CD14-positive monocyte (primary cell): ENCODE measurements at regions of chr2 and their contacts with region 1.

Region 1: GRCh38 chr2:226308986-226309385 is 490.6 kb downstream of the IRS1 start:
- DNase-seq: no peak
- H3K4me3 ChIP-seq: no peak overlapping the region
- H3K4me3 Mint-ChIP-seq: no peak overlapping the region
- H3K27ac ChIP-seq: no peak overlapping the region
- H3K27ac Mint-ChIP-seq: no peak overlapping the region
- H3K4me1 ChIP-seq: peaks cover 26 to 30% of the 10 kb centered on the region in 2 donors
- H3K4me1 Mint-ChIP-seq: peaks cover 16% of the 10 kb centered on the region
- H3K27me3 ChIP-seq: peaks cover 0 to 2% of the 10 kb centered on the region in 2 donors
- H3K27me3 Mint-ChIP-seq: peaks cover 0 to 6% (median 5%) of the 10 kb centered on the region in 3 donors
- CTCF ChIP-seq: no peak

Region 2: DNA sequence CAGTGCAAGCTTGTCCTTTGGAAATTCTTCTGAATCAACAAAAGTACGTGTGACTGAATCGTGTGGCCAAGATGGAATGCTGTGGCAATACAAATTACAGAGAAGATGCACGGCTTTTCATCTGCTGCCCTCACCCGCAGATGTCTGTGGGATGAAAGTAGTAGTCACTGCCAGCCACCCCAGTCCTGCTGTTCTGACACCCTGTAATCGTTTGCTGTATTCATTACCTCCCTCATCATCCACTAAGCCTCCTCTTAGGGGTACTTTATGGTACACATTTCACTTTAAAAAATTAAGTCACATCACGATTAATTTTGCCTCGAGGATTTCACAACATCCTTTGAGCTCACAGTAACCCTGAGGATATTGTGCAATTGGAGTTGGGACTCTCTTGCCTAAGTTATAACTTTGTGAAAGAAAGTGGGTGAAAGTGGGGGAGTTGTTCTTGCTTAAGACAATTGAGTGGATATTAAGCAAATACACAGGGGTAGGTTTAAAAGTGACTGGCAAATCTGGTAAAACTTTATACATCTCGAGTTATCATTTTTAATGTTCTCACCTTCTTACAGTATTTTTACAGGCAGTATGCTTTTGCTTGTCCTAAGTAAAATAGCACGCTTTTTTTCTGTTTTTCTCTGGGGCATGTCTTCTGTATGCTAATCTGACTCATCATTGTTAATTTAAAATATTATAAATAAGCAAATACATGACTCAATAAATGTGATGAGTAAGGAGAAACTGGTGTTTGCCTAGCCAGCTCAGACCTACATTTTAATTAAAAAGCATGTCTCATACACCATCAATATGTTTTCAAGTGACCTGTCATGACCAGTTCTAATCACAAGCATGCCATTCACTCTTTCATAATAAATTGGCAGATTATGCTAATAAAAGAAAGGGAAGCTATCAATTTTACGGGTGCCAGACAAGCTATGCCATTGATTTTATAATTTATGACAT is 190.2 kb before region 1 on chr2:
- intact Hi-C with region 1: loop called in 1 of 2 experiments (anchors 5 kb)
- DNase-seq: peak; percentile 88 to 95 (median 95)
- H3K4me3 ChIP-seq: peak overlapping the region; percentile 45 to 88 (median 68)
- H3K4me3 Mint-ChIP-seq: peak overlapping the region; percentile 70 to 93
- H3K27ac ChIP-seq: peak overlapping the region; percentile 95 to 97
- H3K27ac Mint-ChIP-seq: peak overlapping the region; percentile 97 to 100 (median 99)
- H3K4me1 ChIP-seq: peaks cover 54 to 68% of the 10 kb centered on the region in 2 donors
- H3K4me1 Mint-ChIP-seq: peaks cover 59% of the 10 kb centered on the region
- H3K27me3 ChIP-seq: no peaks in the 10 kb centered on the region
- H3K27me3 Mint-ChIP-seq: no peaks in the 10 kb centered on the region
- CTCF ChIP-seq: no peak

Region 3: GRCh38 chr2:226423498-226423960 is 114.5 kb after region 1 on chr2:
- intact Hi-C with region 1: loop called in 1 of 2 experiments (anchors 10 kb)
- DNase-seq: peak; percentile 85 to 94 (median 93)
- H3K4me3 ChIP-seq: peak overlapping the region in 1 of 3 experiments; percentile 59
- H3K4me3 Mint-ChIP-seq: peak overlapping the region; percentile 7 to 79
- H3K27ac ChIP-seq: peak overlapping the region; percentile 77 to 91
- H3K27ac Mint-ChIP-seq: peak overlapping the region; percentile 88 to 95 (median 90)
- H3K4me1 ChIP-seq: peaks cover 56 to 72% of the 10 kb centered on the region in 2 donors
- H3K4me1 Mint-ChIP-seq: peaks cover 64% of the 10 kb centered on the region
- H3K27me3 ChIP-seq: no peaks in the 10 kb centered on the region
- H3K27me3 Mint-ChIP-seq: no peaks in the 10 kb centered on the region
- CTCF ChIP-seq: no peak